ENCODE measurements at regions of chr14 and their contacts with region 1.

Region 1: DNA sequence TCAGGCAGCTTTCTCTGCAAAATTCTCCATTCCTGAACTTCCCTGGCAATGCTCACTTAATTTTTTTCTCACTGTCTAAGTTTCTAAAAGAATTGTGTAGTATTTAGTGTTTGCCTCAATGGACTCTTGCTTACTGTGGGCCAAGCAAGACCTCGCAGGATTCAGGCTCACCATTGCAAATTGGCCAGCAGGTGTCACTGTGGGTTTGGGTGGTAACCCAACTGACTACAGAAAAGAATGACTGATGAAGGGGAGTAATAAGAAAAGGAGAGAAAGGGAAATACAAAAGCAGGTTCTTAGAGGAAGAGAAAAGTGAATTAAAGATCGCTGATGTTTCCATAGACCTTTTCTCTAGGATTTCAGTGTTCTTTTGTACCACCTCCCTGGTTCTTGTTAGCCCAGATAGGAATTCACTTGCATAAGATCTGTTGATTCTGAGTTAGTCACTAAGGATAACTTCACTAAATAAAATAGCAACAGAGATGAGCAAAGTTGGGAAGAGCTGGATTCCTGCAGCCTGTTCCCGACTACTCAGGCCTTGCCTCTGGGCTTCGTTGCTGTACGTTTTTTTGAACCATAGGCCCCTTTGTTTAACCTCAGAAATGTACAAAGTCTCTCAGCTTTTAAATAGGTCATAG is 386.5 kb upstream of the DDHD1 start:
- DNase-seq: peak; percentile 73
- ATAC-seq: peak; percentile 90
- H3K4me3 ChIP-seq: no peak overlapping the region
- H3K27ac ChIP-seq: no peak overlapping the region
- H3K4me1 ChIP-seq: peaks cover 15% of the 10 kb centered on the region
- H3K27me3 ChIP-seq: no peaks in the 10 kb centered on the region
- CTCF ChIP-seq: peak; percentile 91
- EP300 ChIP-seq: no peak
- POLR2A ChIP-seq: no peak
- RAD21 ChIP-seq: peak; percentile 88

Region 2: GRCh38 chr14:53601409-53601808 is 61.8 kb after region 1 on chr14:
- CTCF ChIA-PET with region 1: no interaction called
- POLR2A ChIA-PET with region 1: no interaction called
- in situ Hi-C with region 1: no loop called
- intact Hi-C with region 1: no loop called
- DNase-seq: no peak
- ATAC-seq: no peak
- H3K4me3 ChIP-seq: no peak overlapping the region
- H3K27ac ChIP-seq: no peak overlapping the region
- H3K4me1 ChIP-seq: peaks cover 22% of the 10 kb centered on the region
- H3K27me3 ChIP-seq: no peaks in the 10 kb centered on the region
- CTCF ChIP-seq: no peak
- EP300 ChIP-seq: no peak
- POLR2A ChIP-seq: no peak
- RAD21 ChIP-seq: no peak

Region 3: GRCh38 chr14:53613404-53614253 is 74.0 kb after region 1 on chr14:
- CTCF ChIA-PET with region 1: no interaction called
- POLR2A ChIA-PET with region 1: no interaction called
- in situ Hi-C with region 1: no loop called
- intact Hi-C with region 1: loop called (anchors 1 kb)
- DNase-seq: peak; percentile 100
- ATAC-seq: peak; percentile 98
- H3K4me3 ChIP-seq: peak overlapping the region; percentile 70 to 72 (median 70)
- H3K27ac ChIP-seq: peak overlapping the region; percentile 98
- H3K4me1 ChIP-seq: peaks cover 91% of the 10 kb centered on the region
- H3K27me3 ChIP-seq: no peaks in the 10 kb centered on the region
- CTCF ChIP-seq: peak; percentile 72
- EP300 ChIP-seq: peak; percentile 94 to 97
- POLR2A ChIP-seq: peak; percentile 62 to 73; a peak in 3 of 4 replicates
- RAD21 ChIP-seq: no peak; the same call in 1 of the 2 replicates

Region 4: DNA sequence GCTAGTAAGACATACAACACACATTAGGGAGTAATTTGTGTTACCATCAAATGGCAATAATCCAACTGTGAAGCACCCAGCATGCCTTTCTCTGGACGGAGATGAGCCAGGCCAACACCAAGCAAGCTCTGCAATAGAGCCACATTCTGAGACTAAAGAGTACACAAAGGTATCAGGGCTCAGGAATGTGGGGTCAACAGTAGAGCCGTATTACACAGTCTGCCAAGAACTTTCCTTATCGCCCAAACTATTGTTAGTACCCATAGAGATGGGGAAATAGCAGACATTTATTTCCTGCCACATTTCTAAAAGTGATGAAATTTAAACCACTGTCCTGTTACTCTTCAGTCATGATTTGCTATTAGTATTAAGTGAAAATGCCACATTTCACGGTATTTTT is 303.3 kb after region 1 on chr14:
- CTCF ChIA-PET with region 1: no interaction called
- POLR2A ChIA-PET with region 1: no interaction called
- in situ Hi-C with region 1: no loop called
- intact Hi-C with region 1: loop called (anchors 10 kb)
- DNase-seq: peak; percentile 95
- ATAC-seq: peak; percentile 98
- H3K4me3 ChIP-seq: no peak overlapping the region
- H3K27ac ChIP-seq: peak overlapping the region; percentile 53
- H3K4me1 ChIP-seq: peaks cover 85% of the 10 kb centered on the region
- H3K27me3 ChIP-seq: no peaks in the 10 kb centered on the region
- CTCF ChIP-seq: no peak
- EP300 ChIP-seq: peak; percentile 62 to 76; a peak in 2 of 4 replicates
- POLR2A ChIP-seq: no peak
- RAD21 ChIP-seq: no peak

Region 5: DNA sequence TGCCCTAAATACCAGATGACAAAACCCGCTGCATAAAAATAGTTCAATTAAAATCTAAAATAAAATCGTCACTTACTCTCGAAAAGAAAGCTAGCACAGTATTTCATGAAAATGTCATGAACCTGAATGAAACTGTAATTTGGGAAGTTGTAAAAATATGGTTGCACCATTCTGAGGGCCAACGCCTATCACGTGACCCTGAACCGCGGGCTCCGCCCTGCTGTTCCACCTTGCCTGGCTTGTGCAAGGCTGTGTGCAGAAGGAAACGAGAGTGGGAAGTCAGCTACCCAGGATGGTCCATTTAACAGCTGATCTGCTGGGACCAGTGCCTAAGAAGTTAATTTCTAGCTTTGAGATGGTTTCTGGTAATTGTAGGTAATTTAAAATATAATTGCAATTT is 508.7 kb after region 1 on chr14:
- CTCF ChIA-PET with region 1: no interaction called
- POLR2A ChIA-PET with region 1: no interaction called
- in situ Hi-C with region 1: no loop called
- intact Hi-C with region 1: loop called (anchors 5 kb)
- DNase-seq: peak; percentile 15
- ATAC-seq: peak; percentile 63
- H3K4me3 ChIP-seq: no peak overlapping the region; a peak in 1 of 6 replicates
- H3K27ac ChIP-seq: peak overlapping the region; percentile 79
- H3K4me1 ChIP-seq: peaks cover 63% of the 10 kb centered on the region
- H3K27me3 ChIP-seq: no peaks in the 10 kb centered on the region
- CTCF ChIP-seq: no peak
- EP300 ChIP-seq: no peak
- POLR2A ChIP-seq: no peak
- RAD21 ChIP-seq: no peak

Region 6: DNA sequence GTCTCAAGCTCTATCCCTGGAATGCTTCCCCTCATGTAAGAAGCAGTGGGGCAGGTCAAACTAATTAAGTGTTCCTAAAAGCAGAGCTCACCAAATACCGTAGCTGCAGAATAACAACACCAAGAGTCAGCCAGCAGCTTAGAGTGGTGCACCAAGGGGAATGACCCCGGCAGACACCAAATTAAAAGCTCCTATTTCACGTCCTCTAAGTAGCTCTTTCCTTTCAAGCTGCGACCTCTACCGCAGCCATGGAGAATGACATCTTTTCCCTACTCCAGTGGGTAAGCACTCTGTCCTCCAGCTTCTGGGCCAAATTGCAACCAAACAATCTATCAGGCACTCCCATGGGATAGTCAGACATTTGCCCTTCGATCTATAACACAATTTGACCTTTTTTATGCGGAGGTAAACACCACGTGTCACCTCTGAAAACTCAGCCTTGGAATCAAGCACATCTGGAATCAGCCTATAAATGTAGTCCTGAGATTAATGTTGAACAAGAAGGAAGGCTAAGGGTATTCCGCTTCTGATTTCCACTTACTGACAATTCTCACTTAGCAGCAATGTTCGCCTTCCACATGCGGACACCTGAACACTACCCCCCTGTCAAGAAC is 789.6 kb after region 1 on chr14:
- CTCF ChIA-PET with region 1: no interaction called
- POLR2A ChIA-PET with region 1: no interaction called
- in situ Hi-C with region 1: no loop called
- intact Hi-C with region 1: loop called (anchors 1 kb)
- DNase-seq: peak; percentile 65
- ATAC-seq: peak; percentile 94
- H3K4me3 ChIP-seq: no peak overlapping the region
- H3K27ac ChIP-seq: no peak overlapping the region
- H3K4me1 ChIP-seq: peaks cover 19% of the 10 kb centered on the region
- H3K27me3 ChIP-seq: no peaks in the 10 kb centered on the region
- CTCF ChIP-seq: peak; percentile 93
- EP300 ChIP-seq: no peak
- POLR2A ChIP-seq: no peak
- RAD21 ChIP-seq: peak; percentile 86

Region 7: GRCh38 chr14:54347997-54348611 is 808.5 kb after region 1 on chr14:
- CTCF ChIA-PET with region 1: interaction called, 3 read pairs
- POLR2A ChIA-PET with region 1: no interaction called
- in situ Hi-C with region 1: no loop called
- intact Hi-C with region 1: loop called (anchors 1 kb)
- DNase-seq: peak; percentile 75
- ATAC-seq: peak; percentile 77
- H3K4me3 ChIP-seq: no peak overlapping the region
- H3K27ac ChIP-seq: no peak overlapping the region
- H3K4me1 ChIP-seq: peaks cover 54% of the 10 kb centered on the region
- H3K27me3 ChIP-seq: no peaks in the 10 kb centered on the region
- CTCF ChIP-seq: peak; percentile 87
- EP300 ChIP-seq: no peak
- POLR2A ChIP-seq: no peak
- RAD21 ChIP-seq: peak; percentile 87

Measured in HepG2 (cell line).